Colonic mucosa (tissue), 4 donors: ENCODE measurements at regions of chr1 and their contacts with region 1.

Region 1: DNA sequence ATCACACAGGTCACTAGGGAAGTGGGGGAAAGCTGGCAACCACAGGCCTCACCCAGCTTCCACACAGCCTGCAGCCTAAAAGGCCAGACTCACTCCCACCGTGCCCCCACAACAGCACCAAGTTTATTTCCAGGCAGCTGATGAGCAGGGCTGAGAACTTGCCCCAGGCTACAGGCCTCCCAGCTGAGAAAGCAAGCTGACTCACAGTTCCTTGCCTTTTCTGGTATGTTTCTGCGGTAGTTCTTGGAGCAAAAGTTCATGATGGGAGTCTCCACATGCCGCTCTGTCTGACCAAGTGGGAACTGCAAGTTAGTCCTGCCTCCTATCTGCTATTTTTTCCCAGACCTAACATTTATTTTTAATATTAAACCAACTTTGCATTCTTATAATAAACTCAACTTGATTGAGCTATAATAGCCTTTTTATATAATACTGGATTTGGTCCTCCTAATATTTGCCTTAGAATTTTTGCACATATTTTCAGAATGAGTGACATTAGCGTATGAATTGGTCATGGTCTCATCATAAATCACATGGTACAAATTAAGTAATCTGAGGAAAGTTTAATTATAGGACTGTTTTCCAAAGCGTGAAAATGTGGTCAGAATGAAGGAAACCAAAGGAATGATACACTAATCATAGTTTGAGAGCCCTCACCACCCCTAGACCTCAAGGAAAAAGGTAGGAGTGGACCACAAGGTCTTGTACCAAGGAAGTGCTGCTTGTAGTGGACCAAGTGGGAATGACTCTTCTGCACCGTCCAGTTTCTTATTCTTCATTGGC is 30.7 kb downstream of the RPAP2 start:
- DNase-seq: no peak
- H3K4me3 ChIP-seq: no peak overlapping the region
- H3K27ac ChIP-seq: no peak overlapping the region
- H3K4me1 ChIP-seq: no peaks in the 10 kb centered on the region
- H3K27me3 ChIP-seq: no peaks in the 10 kb centered on the region
- CTCF ChIP-seq: no peak

Region 2: GRCh38 chr1:92184632-92185031 is 144.9 kb before region 1 on chr1:
- intact Hi-C with region 1: loop called (anchors 5 kb)
- DNase-seq: no peak
- H3K4me3 ChIP-seq: no peak overlapping the region
- H3K27ac ChIP-seq: no peak overlapping the region
- H3K4me1 ChIP-seq: no peaks in the 10 kb centered on the region
- H3K27me3 ChIP-seq: no peaks in the 10 kb centered on the region
- CTCF ChIP-seq: no peak